A549 (cell line): ENCODE measurements at regions of chr15 and their contacts with region 1.

Region 1: DNA sequence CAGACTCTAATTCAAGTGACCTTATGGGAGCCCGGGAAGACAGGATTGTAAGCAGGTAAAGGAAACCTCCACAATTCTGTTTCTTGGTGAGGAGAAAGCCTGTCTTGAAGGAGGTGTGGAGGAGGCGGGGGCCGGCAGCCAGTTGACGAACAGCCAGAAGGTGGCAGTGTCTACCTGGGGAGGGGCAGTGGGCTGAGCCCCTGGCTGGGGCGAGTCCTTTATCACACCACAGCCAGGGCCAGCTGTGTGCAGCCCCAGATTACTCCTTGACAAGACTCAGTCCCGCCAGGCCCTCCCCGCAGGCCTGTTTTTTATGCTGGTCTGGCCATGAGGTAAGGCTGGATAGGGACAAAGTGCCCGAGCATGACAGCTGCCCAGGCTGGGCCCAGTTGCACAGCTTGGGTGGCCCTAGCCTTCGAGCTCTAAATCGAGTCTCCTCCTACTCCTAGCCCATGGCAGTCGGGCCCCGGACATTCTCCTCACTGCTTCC is 40.9 kb upstream of the IDH2 start:
- DNase-seq: peak; percentile 88 to 91
- ATAC-seq: peak; percentile 99
- H3K4me3 ChIP-seq: no peak overlapping the region
- H3K27ac ChIP-seq: peak overlapping the region; percentile 58 to 82
- H3K4me1 ChIP-seq: peaks cover 14% of the 10 kb centered on the region
- CTCF ChIP-seq: peak; percentile 99
- EP300 ChIP-seq: no peak
- POLR2A ChIP-seq: no peak
- RAD21 ChIP-seq: peak; percentile 99 to 100

Region 2: GRCh38 chr15:89936051-89936785 is 207.0 kb before region 1 on chr15:
- CTCF ChIA-PET with region 1: no interaction called
- POLR2A ChIA-PET with region 1: no interaction called
- DNase-seq: no peak
- ATAC-seq: peak; percentile 23 to 31; a peak in 3 of 6 replicates
- H3K4me3 ChIP-seq: no peak overlapping the region
- H3K27ac ChIP-seq: no peak overlapping the region
- H3K4me1 ChIP-seq: no peaks in the 10 kb centered on the region
- CTCF ChIP-seq: no peak
- EP300 ChIP-seq: no peak
- POLR2A ChIP-seq: no peak
- RAD21 ChIP-seq: no peak

Region 3: DNA sequence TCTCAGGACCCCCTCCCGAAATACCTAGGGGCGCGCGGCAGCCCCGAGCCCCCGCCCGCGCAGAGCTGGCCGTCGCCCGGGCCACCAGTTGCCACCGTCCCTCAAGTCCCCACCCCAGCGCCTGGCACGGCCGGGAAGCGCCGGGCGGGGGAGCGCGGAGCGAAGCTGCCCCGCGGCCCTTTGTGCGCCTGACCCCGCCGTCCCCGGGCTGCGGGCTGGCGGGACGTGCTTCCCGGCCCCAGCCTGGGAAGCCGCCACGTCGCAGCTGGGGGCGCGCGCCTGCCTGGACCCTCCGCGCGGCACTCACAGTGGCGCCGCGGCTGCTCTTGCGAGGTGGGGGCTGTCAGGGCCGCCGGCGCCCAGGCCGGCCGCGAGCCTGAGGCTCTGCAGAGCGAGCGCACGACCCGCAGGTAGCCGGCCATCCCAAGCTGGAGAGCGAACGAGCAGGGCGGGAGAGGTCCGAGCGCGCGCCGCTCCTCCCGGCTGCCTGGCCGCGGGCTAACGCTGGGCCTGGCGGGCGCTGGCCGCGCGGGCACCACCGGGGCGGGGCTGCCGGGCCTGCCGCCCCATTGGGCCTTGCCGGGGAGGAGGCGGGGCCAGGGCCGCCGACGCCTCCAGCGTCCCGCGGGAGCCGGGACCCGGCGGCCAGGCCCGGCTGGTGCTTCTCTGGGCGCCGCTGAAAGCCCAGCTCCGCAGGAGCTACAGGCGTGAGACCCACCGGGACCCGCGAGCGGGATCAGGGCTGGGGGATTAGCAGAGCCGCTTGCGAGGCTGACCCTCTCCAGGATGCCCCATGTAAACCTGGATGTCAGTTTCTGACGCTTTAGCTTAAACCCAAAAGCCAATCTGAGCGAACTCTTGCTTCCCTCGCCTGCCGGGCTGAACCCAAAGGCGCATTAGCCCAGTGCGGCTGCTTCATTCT is 41.0 kb before region 1 on chr15 and contains the start of gene IDH2:
- CTCF ChIA-PET with region 1: interaction called, 13 read pairs
- POLR2A ChIA-PET with region 1: no interaction called
- DNase-seq: peak; percentile 78 to 92
- ATAC-seq: peak; percentile 91 to 95
- H3K4me3 ChIP-seq: peak within 1 kb of the TSS; percentile 87
- H3K27ac ChIP-seq: peak within 1 kb of the TSS; percentile 86 to 92
- H3K4me1 ChIP-seq: peaks cover 33% of the 10 kb centered on the region
- CTCF ChIP-seq: 0 out of 3 replicates have a peak, but pooled peaks have one; percentile 8
- EP300 ChIP-seq: no peak
- POLR2A ChIP-seq: peak; percentile 97
- RAD21 ChIP-seq: no peak
- polyA plus RNA-seq, gene IDH2: 31.8 and 37.7 TPM in 2 replicates

Region 4: GRCh38 chr15:90126457-90127435 is 16.5 kb before region 1 on chr15:
- CTCF ChIA-PET with region 1: interaction called, 16 read pairs
- POLR2A ChIA-PET with region 1: no interaction called
- DNase-seq: peak in 1 of 2 experiments; percentile 50
- ATAC-seq: peak; percentile 85 to 86
- H3K4me3 ChIP-seq: no peak overlapping the region
- H3K27ac ChIP-seq: peak overlapping the region in 1 of 2 experiments; percentile 56; a peak in 3 of 6 replicates
- H3K4me1 ChIP-seq: peaks cover 14% of the 10 kb centered on the region
- CTCF ChIP-seq: no peak
- EP300 ChIP-seq: no peak
- POLR2A ChIP-seq: no peak
- RAD21 ChIP-seq: no peak

Region 5: DNA sequence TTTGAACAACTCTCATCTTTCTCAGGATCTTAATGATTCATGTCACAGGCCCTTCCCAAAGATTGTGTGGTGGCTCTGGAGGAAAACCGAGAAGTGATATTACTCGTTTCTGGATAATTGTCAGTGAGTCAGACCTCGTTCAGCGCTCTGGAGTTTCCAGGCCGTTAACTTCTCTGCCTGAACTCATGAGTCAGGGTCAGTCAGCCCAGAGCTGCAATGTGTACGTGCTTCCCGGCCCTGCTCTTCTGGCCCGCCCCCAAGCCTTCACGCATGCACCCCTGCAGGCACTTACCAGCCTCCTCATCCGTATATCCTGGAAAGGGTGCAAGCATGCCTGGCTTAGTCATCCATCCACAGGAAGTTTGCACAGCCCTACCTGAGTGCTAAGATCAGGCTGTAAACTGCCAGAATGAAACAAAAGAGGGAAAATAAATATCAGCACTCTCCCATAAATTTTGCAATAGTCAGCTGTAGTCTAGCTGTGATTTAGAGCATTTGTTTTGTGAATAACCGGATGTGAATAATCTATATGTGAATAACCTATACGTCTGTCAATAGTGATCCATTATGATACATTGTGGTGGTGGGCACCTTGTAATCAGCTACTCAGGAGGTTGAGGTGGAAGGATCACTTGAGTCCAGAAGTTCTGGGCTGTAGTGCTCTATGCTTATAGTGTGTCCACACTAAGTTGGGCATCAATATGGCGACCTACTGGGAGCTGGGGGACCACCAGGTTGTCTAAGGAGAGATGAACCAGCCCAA is 22.6 kb after region 1 on chr15:
- CTCF ChIA-PET with region 1: no interaction called
- POLR2A ChIA-PET with region 1: no interaction called
- DNase-seq: peak; percentile 95 to 100
- ATAC-seq: peak; percentile 98 to 99
- H3K4me3 ChIP-seq: no peak overlapping the region
- H3K27ac ChIP-seq: peak overlapping the region; percentile 85 to 94
- H3K4me1 ChIP-seq: peaks cover 50% of the 10 kb centered on the region
- CTCF ChIP-seq: no peak
- EP300 ChIP-seq: peak; percentile 90 to 95
- POLR2A ChIP-seq: no peak
- RAD21 ChIP-seq: peak; percentile 16 to 55; a peak in 4 of 5 replicates

Region 6: DNA sequence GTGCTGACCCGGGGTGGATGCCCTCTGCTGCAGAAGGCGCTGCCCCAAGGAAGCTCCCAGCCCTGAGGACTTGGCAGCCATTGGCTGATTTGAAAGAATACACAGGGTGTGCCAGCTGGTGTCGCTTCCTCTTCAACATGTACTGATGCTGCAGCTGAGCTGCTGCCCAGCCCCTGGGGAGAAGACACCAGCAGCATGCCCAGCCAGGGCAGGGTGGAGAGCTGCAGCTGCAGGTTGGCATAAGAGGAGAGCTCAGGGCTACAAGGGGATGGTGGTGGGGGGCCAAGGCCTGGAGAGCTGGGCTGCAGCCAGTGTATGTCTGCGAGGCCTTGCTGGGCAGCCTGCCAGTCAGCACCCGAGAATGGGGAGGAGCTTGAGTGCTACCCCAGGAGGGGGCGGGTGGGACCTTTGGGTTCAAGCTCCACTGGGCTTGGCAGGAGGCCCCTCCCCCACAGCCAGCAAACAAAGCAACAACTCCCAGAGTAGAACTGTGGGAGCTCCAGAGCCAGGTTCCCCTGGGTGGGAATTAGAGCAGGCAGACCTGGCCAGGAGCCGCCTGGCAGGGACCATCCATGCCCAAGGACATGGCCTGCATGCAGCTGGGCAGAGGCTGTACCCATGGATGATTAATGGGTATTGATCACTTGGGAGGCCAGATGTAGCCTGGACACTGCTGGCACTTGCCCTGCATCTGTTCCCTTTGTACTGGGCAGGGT is 48.7 kb after region 1 on chr15:
- CTCF ChIA-PET with region 1: interaction called, 13 read pairs
- POLR2A ChIA-PET with region 1: no interaction called
- DNase-seq: peak in 1 of 2 experiments; percentile 92
- ATAC-seq: peak; percentile 84 to 85
- H3K4me3 ChIP-seq: no peak overlapping the region
- H3K27ac ChIP-seq: peak overlapping the region; percentile 74 to 89
- H3K4me1 ChIP-seq: peaks cover 55% of the 10 kb centered on the region
- CTCF ChIP-seq: no peak
- EP300 ChIP-seq: no peak
- POLR2A ChIP-seq: no peak
- RAD21 ChIP-seq: peak in 1 of 2 experiments; percentile 16; a peak in 1 of 5 replicates

Region 7: GRCh38 chr15:90249203-90249863 is 106.1 kb after region 1 on chr15 and contains the start of gene TTLL13:
- CTCF ChIA-PET with region 1: interaction called, 14 read pairs
- POLR2A ChIA-PET with region 1: no interaction called
- DNase-seq: peak; percentile 92 to 95
- ATAC-seq: peak; percentile 97 to 98
- H3K4me3 ChIP-seq: peak within 1 kb of the TSS; percentile 69
- H3K27ac ChIP-seq: peak within 1 kb of the TSS; percentile 83 to 86
- H3K4me1 ChIP-seq: peaks cover 12% of the 10 kb centered on the region
- CTCF ChIP-seq: no peak
- EP300 ChIP-seq: no peak
- POLR2A ChIP-seq: peak; percentile 93
- RAD21 ChIP-seq: no peak
- polyA plus RNA-seq, gene TTLL13: 0.56 and 0.61 TPM in 2 replicates

Region 8: GRCh38 chr15:90300988-90301706 is 157.9 kb after region 1 on chr15:
- CTCF ChIA-PET with region 1: interaction called, 12 read pairs
- POLR2A ChIA-PET with region 1: no interaction called
- DNase-seq: peak; percentile 62 to 84
- ATAC-seq: peak; percentile 84 to 97
- H3K4me3 ChIP-seq: no peak overlapping the region
- H3K27ac ChIP-seq: peak overlapping the region; percentile 23 to 71; a peak in 4 of 6 replicates
- H3K4me1 ChIP-seq: no peaks in the 10 kb centered on the region
- CTCF ChIP-seq: peak; percentile 81
- EP300 ChIP-seq: no peak
- POLR2A ChIP-seq: no peak
- RAD21 ChIP-seq: peak; percentile 44 to 64; a peak in 4 of 5 replicates